Naive thymus-derived CD4-positive, alpha-beta T cell (primary cell): ENCODE measurements at regions of chr3 and their contacts with region 1.

Region 1: DNA sequence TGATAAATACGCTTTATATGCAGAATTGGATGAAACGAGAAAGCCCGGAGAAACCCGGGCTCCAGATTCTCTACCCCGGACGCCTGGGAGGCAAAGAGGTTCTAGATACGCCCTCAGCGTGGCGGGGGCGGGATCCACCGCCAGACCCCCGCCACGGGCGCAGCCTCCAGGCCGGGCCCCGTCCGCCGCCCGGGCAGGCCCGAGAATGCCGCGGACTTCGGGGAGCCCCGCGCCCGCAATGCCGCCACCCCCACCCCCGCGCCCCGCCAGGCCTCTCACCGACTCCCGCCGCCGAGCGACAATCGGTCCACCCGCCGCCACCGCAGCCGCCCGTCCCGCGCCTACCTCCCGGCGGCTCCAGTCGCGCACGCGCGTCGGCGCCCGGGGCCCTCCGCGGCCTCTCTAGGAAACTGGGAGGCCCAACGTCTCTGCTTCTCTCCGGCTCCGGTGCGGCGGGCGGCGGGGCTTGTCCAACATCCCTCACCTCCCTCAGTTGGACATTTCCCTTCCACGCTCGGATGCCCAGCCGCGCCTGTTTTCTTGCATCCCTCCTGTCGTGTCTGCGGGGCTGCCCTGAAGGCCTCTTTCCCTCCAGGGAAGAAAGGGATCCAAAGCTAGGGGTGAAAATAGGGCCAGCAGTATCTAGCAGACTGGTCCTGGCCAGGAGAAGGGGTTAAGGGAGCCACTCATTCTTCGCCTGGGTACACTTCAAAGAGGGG is at the start of gene ZNF445:
- DNase-seq: peak; percentile 66 to 85 (median 79)
- ATAC-seq: peak; percentile 96
- H3K4me3 ChIP-seq: peak within 1 kb of the TSS; percentile 91
- H3K4me3 Mint-ChIP-seq: peak within 1 kb of the TSS; percentile 85 to 98 (median 92)
- H3K27ac ChIP-seq: peak within 1 kb of the TSS; percentile 70
- H3K27ac Mint-ChIP-seq: peak within 1 kb of the TSS; percentile 79 to 95 (median 87)
- H3K4me1 ChIP-seq: peaks cover 4 to 18% of the 10 kb centered on the region in 2 donors
- H3K4me1 Mint-ChIP-seq: peaks cover 16 to 51% (median 40%) of the 10 kb centered on the region in 7 donors
- H3K27me3 ChIP-seq: no peaks in the 10 kb centered on the region
- H3K27me3 Mint-ChIP-seq: no peaks in the 10 kb centered on the region
- total RNA-seq, gene ZNF445: 16.8 to 37.6 (median 24.4) TPM

Region 2: GRCh38 chr3:44323341-44323955 is 154.0 kb before region 1 on chr3:
- CTCF ChIA-PET with region 1: interaction called, 3 read pairs
- POLR2A ChIA-PET with region 1: no interaction called
- intact Hi-C with region 1: loop called in 1 of 2 experiments (anchors 1 kb)
- DNase-seq: peak in 8 of 9 donors; percentile 20 to 60 (median 41)
- ATAC-seq: peak; percentile 69
- H3K4me3 ChIP-seq: no peak overlapping the region
- H3K4me3 Mint-ChIP-seq: no peak overlapping the region
- H3K27ac ChIP-seq: no peak overlapping the region
- H3K27ac Mint-ChIP-seq: no peak overlapping the region
- H3K4me1 ChIP-seq: no peaks in the 10 kb centered on the region
- H3K4me1 Mint-ChIP-seq: peaks cover 0 to 3% (median 0%) of the 10 kb centered on the region in 7 donors
- H3K27me3 ChIP-seq: no peaks in the 10 kb centered on the region
- H3K27me3 Mint-ChIP-seq: peaks cover 6 to 37% (median 11%) of the 10 kb centered on the region in 5 donors

Region 3: DNA sequence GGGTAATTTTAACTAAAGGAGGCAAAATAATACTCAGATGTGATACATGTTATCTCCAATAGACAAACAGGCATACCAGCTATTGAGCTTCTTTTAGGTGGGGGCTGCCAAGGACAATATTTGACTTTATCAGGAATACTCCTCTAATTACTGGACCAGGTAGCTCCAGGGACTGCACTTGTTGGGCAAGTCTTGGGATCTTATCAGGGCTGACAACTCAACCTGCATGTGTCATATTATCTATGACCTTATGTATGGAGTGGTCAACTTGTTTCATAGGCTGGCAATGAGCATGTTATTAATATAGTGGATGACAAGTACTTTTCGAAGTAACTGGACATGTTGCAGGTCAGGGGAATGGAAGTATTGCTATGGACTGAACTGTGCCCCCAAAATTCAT is 15.0 kb after region 1 on chr3:
- CTCF ChIA-PET with region 1: no interaction called
- POLR2A ChIA-PET with region 1: no interaction called
- intact Hi-C with region 1: no loop called
- DNase-seq: no peak
- ATAC-seq: no peak
- H3K4me3 ChIP-seq: no peak overlapping the region
- H3K4me3 Mint-ChIP-seq: no peak overlapping the region
- H3K27ac ChIP-seq: no peak overlapping the region
- H3K27ac Mint-ChIP-seq: no peak overlapping the region
- H3K4me1 ChIP-seq: no peaks in the 10 kb centered on the region
- H3K4me1 Mint-ChIP-seq: no peaks in the 10 kb centered on the region
- H3K27me3 ChIP-seq: no peaks in the 10 kb centered on the region
- H3K27me3 Mint-ChIP-seq: no peaks in the 10 kb centered on the region

Region 4: DNA sequence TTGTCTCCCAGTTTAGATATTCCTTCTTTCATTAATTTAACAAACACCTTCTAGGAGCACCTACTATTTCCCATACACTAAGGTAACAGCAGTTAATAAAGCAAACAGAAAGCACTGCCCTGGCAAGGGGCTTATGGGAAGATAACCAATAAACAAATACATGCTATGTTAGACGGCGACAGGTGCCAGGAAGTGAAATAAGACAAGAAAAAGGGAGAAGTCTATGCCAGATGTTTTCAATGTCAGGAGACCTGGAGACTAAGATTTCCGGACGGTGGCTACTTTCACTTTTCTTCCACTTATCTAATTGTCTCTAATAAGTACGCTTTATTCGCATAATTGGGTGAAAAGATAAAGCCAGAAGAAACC is 32.5 kb after region 1 on chr3:
- CTCF ChIA-PET with region 1: no interaction called
- POLR2A ChIA-PET with region 1: interaction called, 26 read pairs
- intact Hi-C with region 1: loop called (anchors 1 kb)
- DNase-seq: peak in 3 of 9 donors; percentile 3 to 19 (median 12)
- ATAC-seq: peak; percentile 23
- H3K4me3 ChIP-seq: peak overlapping the region; percentile 73
- H3K4me3 Mint-ChIP-seq: peak overlapping the region; percentile 93 to 98 (median 96)
- H3K27ac ChIP-seq: peak overlapping the region; percentile 92
- H3K27ac Mint-ChIP-seq: peak overlapping the region; percentile 78 to 97 (median 93)
- H3K4me1 ChIP-seq: peaks cover 6 to 19% of the 10 kb centered on the region in 2 donors
- H3K4me1 Mint-ChIP-seq: peaks cover 30 to 52% (median 48%) of the 10 kb centered on the region in 7 donors
- H3K27me3 ChIP-seq: no peaks in the 10 kb centered on the region
- H3K27me3 Mint-ChIP-seq: no peaks in the 10 kb centered on the region

Region 5: DNA sequence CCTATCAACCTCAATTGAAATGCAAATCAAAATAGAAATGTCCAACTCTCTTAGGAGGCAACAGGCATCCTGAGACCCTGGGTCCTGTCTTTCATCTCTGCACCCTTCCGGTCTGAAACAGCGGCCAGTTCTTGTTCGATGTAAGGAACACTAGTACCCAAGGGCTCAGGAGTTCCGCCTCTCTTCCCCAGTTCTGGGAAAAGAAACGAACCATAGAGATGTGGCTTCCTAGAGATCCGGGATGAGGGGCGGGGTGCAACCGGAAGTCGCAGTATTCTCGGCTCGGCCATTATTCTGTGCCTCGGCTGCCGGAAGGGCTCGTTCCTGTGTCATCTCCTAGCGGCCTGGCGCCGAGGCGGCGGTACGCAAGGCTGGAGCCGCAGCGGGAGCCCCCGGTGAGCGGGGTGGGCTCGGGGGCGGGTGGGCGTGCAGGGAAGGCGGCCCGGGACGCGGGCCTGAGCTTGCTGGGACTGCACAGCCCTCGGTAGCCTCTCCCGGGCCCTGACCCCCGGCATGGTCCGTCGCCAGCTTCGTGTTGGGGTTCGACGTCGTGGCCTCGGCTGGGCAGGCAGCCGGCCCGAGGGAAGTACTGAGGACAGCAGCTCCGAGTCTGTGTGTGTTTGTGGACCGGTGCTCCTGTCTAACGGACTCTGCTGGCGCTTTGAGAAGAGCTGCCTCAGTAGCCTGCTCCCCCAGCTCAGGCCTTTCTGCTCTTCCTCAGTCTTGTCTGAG is 147.4 kb after region 1 on chr3 and contains the start of gene ZNF197:
- CTCF ChIA-PET with region 1: no interaction called
- POLR2A ChIA-PET with region 1: no interaction called
- intact Hi-C with region 1: loop called (anchors 1 kb)
- DNase-seq: peak; percentile 5 to 64 (median 27)
- ATAC-seq: peak; percentile 80
- H3K4me3 ChIP-seq: peak within 1 kb of the TSS; percentile 51
- H3K4me3 Mint-ChIP-seq: peak within 1 kb of the TSS; percentile 83 to 94 (median 92)
- H3K27ac ChIP-seq: peak within 1 kb of the TSS; percentile 66
- H3K27ac Mint-ChIP-seq: peak within 1 kb of the TSS; percentile 60 to 88 (median 81)
- H3K4me1 ChIP-seq: peaks cover 9 to 10% of the 10 kb centered on the region in 2 donors
- H3K4me1 Mint-ChIP-seq: peaks cover 18 to 53% (median 47%) of the 10 kb centered on the region in 7 donors
- H3K27me3 ChIP-seq: no peaks in the 10 kb centered on the region
- H3K27me3 Mint-ChIP-seq: no peaks in the 10 kb centered on the region
- total RNA-seq, gene ZNF197: 5.5 to 15.6 (median 15.0) TPM

Region 6: DNA sequence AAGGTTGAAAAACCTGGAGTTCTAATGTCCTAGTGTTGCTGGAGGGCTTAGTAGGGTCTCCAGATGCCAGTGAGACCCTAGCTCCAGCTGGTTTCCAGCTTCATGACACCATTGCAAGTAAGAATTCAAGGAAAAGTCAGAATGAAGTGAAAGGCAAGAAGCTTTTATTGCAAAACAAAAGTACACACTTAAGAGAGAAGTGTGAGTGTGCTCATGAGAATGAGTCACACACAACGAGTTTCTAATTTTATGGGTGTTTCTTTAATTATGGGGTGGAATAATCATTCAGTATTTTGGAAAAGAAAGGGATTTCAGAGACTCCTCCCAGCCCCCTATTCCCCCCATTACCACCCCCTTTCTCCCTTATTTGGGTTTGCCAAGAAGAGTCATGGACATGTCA is 210.4 kb after region 1 on chr3:
- CTCF ChIA-PET with region 1: no interaction called
- POLR2A ChIA-PET with region 1: no interaction called
- intact Hi-C with region 1: no loop called
- DNase-seq: no peak
- ATAC-seq: no peak
- H3K4me3 ChIP-seq: no peak overlapping the region
- H3K4me3 Mint-ChIP-seq: no peak overlapping the region
- H3K27ac ChIP-seq: no peak overlapping the region
- H3K27ac Mint-ChIP-seq: no peak overlapping the region
- H3K4me1 ChIP-seq: no peaks in the 10 kb centered on the region
- H3K4me1 Mint-ChIP-seq: peaks cover 7 to 22% (median 17%) of the 10 kb centered on the region in 7 donors
- H3K27me3 ChIP-seq: no peaks in the 10 kb centered on the region
- H3K27me3 Mint-ChIP-seq: peaks cover 12 to 73% (median 53%) of the 10 kb centered on the region in 5 donors

Region 7: DNA sequence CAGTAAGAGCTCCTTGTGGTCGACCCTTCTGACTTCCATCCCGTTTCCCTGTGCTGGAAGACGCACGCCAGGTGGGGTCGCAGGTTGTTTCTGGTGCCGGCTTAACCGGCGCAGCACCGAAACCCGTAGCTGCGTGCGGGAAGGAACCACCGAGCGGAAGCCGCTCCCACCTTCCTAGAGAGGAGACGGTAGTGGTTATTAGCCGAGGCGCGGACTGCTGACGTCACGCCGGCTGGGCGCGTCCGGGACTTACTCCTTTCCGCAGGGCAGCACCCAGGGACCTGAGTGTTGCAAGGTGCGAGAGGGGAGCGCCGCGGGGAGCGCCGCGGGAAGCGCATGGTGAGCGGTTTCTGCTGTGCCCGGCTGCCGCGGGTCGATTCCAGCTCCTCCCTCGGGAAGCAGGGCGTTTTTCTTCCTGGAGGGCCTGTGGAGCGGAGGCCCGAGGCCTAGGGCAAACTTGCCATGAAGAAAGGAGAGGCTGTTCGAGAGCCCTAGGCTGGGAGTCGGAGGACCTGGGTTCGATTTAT is 252.0 kb after region 1 on chr3 and contains the start of gene ZNF501:
- CTCF ChIA-PET with region 1: no interaction called
- POLR2A ChIA-PET with region 1: no interaction called
- intact Hi-C with region 1: loop called in 1 of 2 experiments (anchors 1 kb)
- DNase-seq: peak; percentile 65 to 83 (median 75)
- ATAC-seq: peak; percentile 97
- H3K4me3 ChIP-seq: peak within 1 kb of the TSS; percentile 75
- H3K4me3 Mint-ChIP-seq: peak within 1 kb of the TSS; percentile 90 to 99 (median 92)
- H3K27ac ChIP-seq: peak within 1 kb of the TSS; percentile 45
- H3K27ac Mint-ChIP-seq: peak within 1 kb of the TSS; percentile 61 to 91 (median 84)
- H3K4me1 ChIP-seq: no peaks in the 10 kb centered on the region
- H3K4me1 Mint-ChIP-seq: peaks cover 2 to 20% (median 15%) of the 10 kb centered on the region in 7 donors
- H3K27me3 ChIP-seq: no peaks in the 10 kb centered on the region
- H3K27me3 Mint-ChIP-seq: no peaks in the 10 kb centered on the region
- total RNA-seq, gene ZNF501: 1.1 to 5.3 (median 2.6) TPM